Right ventricle myocardium inferior (tissue), 1 donor: ENCODE measurements at regions of chr21 and their contacts with region 1.

Region 1: GRCh38 chr21:43728467-43729390 is 9.8 kb downstream of the PDXK start:
- DNase-seq: peak; percentile 96
- ATAC-seq: peak; percentile 90

Region 2: GRCh38 chr21:43775795-43776430 is 47.2 kb after region 1 on chr21 and contains the start of gene CSTB:
- intact Hi-C with region 1: loop called (anchors 5 kb)
- DNase-seq: peak; percentile 95
- ATAC-seq: peak; percentile 84
- total RNA-seq, gene CSTB: 44.1 TPM

Region 3: DNA sequence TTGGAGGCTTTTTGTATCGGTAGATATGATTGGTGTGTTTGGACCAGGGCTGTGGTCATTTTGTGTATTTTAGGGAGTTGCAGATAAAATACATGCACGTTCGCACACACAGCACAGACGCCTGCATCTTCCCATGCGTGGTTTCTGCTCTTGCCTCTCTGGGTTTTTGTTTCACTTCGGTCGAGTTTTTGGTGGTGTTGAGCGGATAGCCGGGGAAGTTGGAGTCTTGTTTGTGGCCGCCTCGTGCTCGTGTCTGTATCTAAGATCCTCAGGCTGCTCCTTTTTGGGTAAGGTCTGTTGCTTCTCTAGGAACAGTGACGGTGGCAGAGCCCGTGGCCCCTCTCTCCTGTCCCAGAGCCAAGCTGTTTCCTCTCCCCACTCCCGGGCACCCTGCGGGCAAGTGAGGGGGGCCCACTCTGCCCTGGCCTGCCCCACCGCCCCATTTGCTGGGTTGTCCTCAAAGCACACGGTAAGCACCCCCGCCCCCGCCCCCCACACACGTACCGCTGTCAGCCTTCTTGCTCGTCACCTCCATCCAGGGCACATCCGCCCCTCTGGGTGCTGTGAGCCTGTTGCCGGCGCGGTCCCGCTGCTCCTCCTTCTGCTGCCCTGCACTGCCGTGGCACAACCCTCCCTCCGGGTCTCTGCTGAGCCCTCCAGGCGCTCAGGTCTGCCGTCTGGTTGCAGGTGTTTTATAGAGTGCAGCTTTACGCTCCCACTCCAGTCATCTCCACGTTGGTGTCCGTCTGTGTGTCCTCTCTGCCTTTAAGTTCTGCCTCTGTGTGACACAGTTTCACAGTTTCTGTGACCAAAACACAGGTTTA is 188.2 kb after region 1 on chr21:
- intact Hi-C with region 1: no loop called
- DNase-seq: no peak
- ATAC-seq: peak; percentile 41